Mucosa of descending colon (tissue), 3 donors: ENCODE measurements at regions of chr19 and their contacts with region 1.

Region 1: GRCh38 chr19:2750808-2751443 is 11.1 kb upstream of the SLC39A3 start:
- DNase-seq: no peak
- ATAC-seq: no peak
- H3K4me3 ChIP-seq: no peak overlapping the region
- H3K4me1 ChIP-seq: peaks cover 2% of the 10 kb centered on the region
- CTCF ChIP-seq: no peak

Region 2: GRCh38 chr19:2648528-2648937 is 102.4 kb before region 1 on chr19:
- intact Hi-C with region 1: loop called (anchors 2 to 5 kb)
- DNase-seq: peak; percentile 75 to 88 (median 82)
- ATAC-seq: peak; percentile 98
- H3K4me3 ChIP-seq: no peak overlapping the region
- H3K4me1 ChIP-seq: no peaks in the 10 kb centered on the region
- CTCF ChIP-seq: peak; percentile 75